ENCODE measurements at regions of chr17 and their contacts with region 1.

Region 1: DNA sequence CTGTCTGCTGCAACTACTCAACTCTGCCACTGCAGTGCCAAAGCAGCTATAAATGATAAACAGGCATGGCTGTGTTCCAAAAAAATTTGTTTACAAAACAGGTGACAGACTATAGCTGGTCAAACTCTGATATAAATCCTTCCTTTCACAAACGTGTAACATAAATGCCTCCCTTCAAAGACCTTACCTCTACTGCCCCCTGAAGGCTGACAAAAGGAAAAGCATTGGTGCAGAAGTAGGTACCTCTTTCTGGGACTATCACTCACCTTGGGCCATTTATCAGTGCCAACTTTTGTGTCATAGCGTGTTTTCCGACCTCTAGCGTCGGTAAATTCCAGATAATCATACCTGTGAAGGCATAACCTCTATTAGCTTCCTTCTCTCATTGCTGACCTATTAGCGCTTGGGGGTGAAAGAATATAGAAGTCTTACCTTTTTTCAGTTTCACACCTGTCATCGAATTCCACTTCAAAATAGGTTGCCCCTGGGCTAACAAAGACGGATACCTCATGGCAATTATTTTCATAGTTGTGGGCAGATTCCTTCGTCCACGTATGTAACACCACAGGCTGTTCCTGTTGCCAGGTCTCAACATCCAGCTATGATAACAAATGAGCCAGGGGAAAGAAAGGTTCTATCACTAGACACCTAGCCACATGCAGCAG is 67.9 kb downstream of the ZZEF1 start:
- DNase-seq: no peak
- H3K4me3 Mint-ChIP-seq: no peak overlapping the region
- H3K27ac Mint-ChIP-seq: no peak overlapping the region
- H3K4me1 Mint-ChIP-seq: no peaks in the 10 kb centered on the region
- H3K27me3 Mint-ChIP-seq: no peaks in the 10 kb centered on the region

Region 2: DNA sequence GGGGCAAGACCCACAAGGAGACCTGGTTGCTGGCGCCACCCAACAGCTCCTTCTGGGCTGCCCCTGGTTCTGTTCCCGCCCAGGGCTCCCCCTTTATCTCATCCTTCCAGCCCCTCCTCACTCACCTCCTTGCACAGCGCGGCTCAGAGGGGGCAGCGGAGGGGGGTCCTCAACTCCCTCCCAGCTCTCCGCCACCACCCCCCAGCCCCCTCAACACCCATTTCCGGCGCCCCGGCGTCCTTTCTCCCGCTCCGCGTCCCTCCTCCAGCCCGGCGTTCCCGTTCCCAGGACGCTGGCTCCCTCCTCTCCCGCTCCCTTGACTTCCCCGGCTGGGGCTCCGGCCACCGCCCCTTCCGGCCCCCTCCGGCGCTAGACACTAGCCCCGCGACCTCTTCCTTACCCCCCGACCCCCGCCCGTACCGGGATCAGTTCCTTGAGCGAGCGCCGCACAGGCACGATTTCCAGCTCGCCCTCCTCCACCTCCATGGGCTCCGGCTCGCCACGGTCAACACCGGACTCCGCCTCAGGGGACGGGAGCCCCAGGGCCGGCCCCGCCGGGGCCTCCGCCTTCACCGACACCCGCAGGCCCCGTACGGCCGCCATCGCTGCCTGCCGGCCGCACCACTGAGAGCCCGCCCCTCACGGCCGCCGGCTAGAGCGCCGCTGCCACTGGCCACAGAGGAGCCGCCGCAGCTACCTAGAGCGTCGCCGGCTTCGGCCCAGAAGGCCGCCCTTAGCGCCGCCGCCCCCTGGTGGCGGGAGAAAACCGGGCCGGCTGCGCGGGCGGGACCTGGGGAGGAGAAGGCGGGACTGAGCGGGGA is 229.1 kb before region 1 on chr17 and contains the start of gene NCBP3:
- intact Hi-C with region 1: loop called (anchors 5 kb)
- DNase-seq: peak; percentile 90
- H3K4me3 Mint-ChIP-seq: peak within 1 kb of the TSS; percentile 97
- H3K27ac Mint-ChIP-seq: peak within 1 kb of the TSS; percentile 97
- H3K4me1 Mint-ChIP-seq: peaks cover 16% of the 10 kb centered on the region
- H3K27me3 Mint-ChIP-seq: peaks cover 9% of the 10 kb centered on the region
- total RNA-seq, gene NCBP3: 54.2 and 56.0 TPM in 2 replicates

Region 3: GRCh38 chr17:3865176-3865575 is 209.8 kb before region 1 on chr17:
- intact Hi-C with region 1: loop called (anchors 1 kb)
- DNase-seq: no peak
- H3K4me3 Mint-ChIP-seq: no peak overlapping the region
- H3K27ac Mint-ChIP-seq: no peak overlapping the region
- H3K4me1 Mint-ChIP-seq: no peaks in the 10 kb centered on the region
- H3K27me3 Mint-ChIP-seq: no peaks in the 10 kb centered on the region

Region 4: GRCh38 chr17:4215882-4216570 is 141.1 kb after region 1 on chr17:
- intact Hi-C with region 1: no loop called
- DNase-seq: no peak
- H3K4me3 Mint-ChIP-seq: no peak overlapping the region
- H3K27ac Mint-ChIP-seq: peak overlapping the region; percentile 15
- H3K4me1 Mint-ChIP-seq: peaks cover 21% of the 10 kb centered on the region
- H3K27me3 Mint-ChIP-seq: no peaks in the 10 kb centered on the region